ENCODE measurements at regions of chr7 and their contacts with region 1.

Region 1: GRCh38 chr7:128387216-128388144 is 22.3 kb downstream of the IMPDH1 start:
- DNase-seq: peak; percentile 71
- ATAC-seq: peak; percentile 89
- H3K4me3 ChIP-seq: no peak overlapping the region
- H3K4me3 Mint-ChIP-seq: no peak overlapping the region
- H3K27ac ChIP-seq: no peak overlapping the region
- H3K27ac Mint-ChIP-seq: no peak overlapping the region
- H3K4me1 ChIP-seq: peaks cover 0 to 7% of the 10 kb centered on the region in 2 donors
- H3K4me1 Mint-ChIP-seq: peaks cover 6% of the 10 kb centered on the region
- H3K27me3 ChIP-seq: peaks cover 0 to 11% (median 3%) of the 10 kb centered on the region in 4 experiments
- H3K27me3 Mint-ChIP-seq: no peaks in the 10 kb centered on the region
- CTCF ChIP-seq: peak; percentile 86

Region 2: DNA sequence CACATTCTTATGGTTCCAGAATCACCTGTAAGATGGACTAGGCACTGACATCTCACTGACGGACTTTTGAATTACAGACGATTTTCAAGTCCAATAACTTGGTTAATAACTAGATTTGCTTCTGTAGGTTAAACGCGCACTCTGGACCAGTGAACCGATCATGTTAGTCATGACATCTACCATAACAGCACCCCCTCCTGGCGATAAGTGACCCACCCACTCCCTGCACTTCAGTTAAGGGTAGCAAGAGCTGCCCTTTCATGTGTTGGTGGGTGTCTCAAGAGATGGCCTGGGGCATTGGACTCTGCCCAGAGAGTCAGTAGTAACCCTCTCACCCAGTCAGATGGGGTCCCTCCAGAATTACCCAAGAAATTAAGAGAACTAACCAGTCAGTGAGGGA is 1147.7 kb before region 1 on chr7:
- CTCF ChIA-PET with region 1: no interaction called
- POLR2A ChIA-PET with region 1: no interaction called
- intact Hi-C with region 1: no loop called
- DNase-seq: no peak
- ATAC-seq: no peak
- H3K4me3 ChIP-seq: no peak overlapping the region
- H3K4me3 Mint-ChIP-seq: no peak overlapping the region
- H3K27ac ChIP-seq: no peak overlapping the region
- H3K27ac Mint-ChIP-seq: no peak overlapping the region
- H3K4me1 ChIP-seq: no peaks in the 10 kb centered on the region
- H3K4me1 Mint-ChIP-seq: no peaks in the 10 kb centered on the region
- H3K27me3 ChIP-seq: peaks cover 0 to 9% (median 3%) of the 10 kb centered on the region in 4 experiments
- H3K27me3 Mint-ChIP-seq: peaks cover 38% of the 10 kb centered on the region
- CTCF ChIP-seq: no peak

Region 3: DNA sequence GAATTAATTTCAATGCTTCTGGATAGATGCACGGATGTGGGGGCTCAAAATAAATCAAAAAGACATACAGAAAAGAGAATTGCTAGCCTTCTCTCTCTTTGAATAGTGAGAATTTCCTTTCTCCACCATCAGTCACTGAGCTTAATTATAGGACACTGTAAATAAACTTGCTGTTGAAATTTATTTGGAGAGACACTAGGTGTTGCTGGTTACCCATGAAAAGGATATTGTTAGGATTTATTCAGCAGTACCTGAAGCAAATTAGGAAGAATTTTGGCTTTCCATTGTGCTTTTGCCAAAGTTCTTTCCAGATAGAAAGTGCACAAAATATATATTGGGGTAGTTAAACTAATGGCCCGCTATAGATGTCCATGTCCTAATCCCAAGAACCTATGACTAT is 829.7 kb before region 1 on chr7:
- CTCF ChIA-PET with region 1: interaction called, 4 read pairs
- POLR2A ChIA-PET with region 1: no interaction called
- intact Hi-C with region 1: loop called (anchors 5 kb)
- DNase-seq: no peak
- ATAC-seq: no peak
- H3K4me3 ChIP-seq: no peak overlapping the region
- H3K4me3 Mint-ChIP-seq: no peak overlapping the region
- H3K27ac ChIP-seq: no peak overlapping the region
- H3K27ac Mint-ChIP-seq: no peak overlapping the region
- H3K4me1 ChIP-seq: no peaks in the 10 kb centered on the region
- H3K4me1 Mint-ChIP-seq: no peaks in the 10 kb centered on the region
- H3K27me3 ChIP-seq: no peaks in the 10 kb centered on the region
- H3K27me3 Mint-ChIP-seq: peaks cover 8% of the 10 kb centered on the region
- CTCF ChIP-seq: no peak

Region 4: DNA sequence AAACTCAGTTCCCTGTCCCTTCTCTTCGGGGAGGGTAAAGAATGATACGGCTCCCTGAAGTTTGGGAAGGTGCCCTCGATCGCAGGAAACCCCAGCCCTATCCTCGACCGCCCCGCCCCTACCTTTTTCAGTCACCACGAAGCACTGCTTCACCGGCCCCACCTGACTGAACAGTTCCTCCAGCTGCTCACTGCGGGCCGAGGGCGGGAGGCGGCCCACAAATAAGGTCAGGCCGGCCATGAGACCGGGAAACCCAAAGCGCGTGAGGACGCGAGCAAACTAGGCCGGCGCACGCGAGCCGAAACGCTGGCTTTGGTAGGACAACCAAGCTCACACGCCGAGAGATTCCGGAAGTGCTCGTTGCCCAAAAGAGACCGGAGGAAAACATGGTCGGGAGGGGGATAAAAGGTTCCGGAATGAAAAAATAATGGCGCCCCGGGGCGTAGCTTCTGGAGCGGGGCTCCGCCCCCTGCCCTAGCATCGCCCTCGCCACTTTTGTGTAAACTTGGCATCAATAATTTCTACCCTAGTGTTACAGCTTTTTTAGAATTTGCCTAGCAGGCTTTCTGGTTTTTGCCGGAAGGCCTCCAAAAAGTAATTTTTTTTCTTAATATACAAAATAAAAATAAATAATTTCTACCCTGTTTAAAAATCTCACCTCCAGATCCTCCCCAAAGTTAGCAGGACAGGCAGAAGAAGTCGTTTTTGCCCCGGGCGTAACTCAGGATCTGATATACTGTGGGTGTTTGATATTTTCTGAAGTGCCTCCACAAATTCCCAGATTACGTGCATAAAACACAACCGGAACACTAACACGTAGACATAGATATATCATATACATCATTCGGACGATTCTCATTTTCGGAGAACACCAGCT is 43.7 kb before region 1 on chr7 and contains the start of gene RBM28:
- CTCF ChIA-PET with region 1: interaction called, 32 read pairs
- POLR2A ChIA-PET with region 1: no interaction called
- intact Hi-C with region 1: loop called (anchors 1 kb)
- DNase-seq: peak; percentile 95
- ATAC-seq: peak; percentile 95
- H3K4me3 ChIP-seq: peak within 1 kb of the TSS; percentile 75 to 91 (median 81)
- H3K4me3 Mint-ChIP-seq: peak within 1 kb of the TSS; percentile 98
- H3K27ac ChIP-seq: peak within 1 kb of the TSS; percentile 71 to 76
- H3K27ac Mint-ChIP-seq: peak within 1 kb of the TSS; percentile 96
- H3K4me1 ChIP-seq: peaks cover 15 to 19% of the 10 kb centered on the region in 2 donors
- H3K4me1 Mint-ChIP-seq: peaks cover 28% of the 10 kb centered on the region
- H3K27me3 ChIP-seq: peaks cover 0 to 11% (median 1%) of the 10 kb centered on the region in 4 experiments
- H3K27me3 Mint-ChIP-seq: peaks cover 14% of the 10 kb centered on the region
- CTCF ChIP-seq: no peak
- total RNA-seq, gene RBM28: 46.2 and 52.8 TPM in 2 replicates

Region 5: DNA sequence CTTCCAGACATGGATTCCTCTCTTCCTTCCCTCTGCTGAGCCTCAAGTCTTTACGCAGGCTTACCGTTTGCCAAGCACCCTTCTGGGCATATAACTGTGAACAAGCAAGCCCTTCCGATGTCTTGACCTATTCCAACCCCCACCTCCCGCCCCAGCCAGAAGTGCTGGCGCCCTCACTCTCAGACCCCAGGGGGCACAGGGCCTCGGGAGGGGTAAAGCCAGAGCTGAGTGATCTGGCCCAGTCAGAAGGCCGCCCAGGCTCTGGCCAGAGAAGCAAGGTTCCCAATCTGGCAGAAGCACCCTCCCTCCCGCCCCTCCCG is 27.2 kb before region 1 on chr7:
- CTCF ChIA-PET with region 1: no interaction called
- POLR2A ChIA-PET with region 1: no interaction called
- intact Hi-C with region 1: no loop called
- DNase-seq: no peak
- ATAC-seq: no peak
- H3K4me3 ChIP-seq: no peak overlapping the region
- H3K4me3 Mint-ChIP-seq: no peak overlapping the region
- H3K27ac ChIP-seq: no peak overlapping the region
- H3K27ac Mint-ChIP-seq: no peak overlapping the region
- H3K4me1 ChIP-seq: peaks cover 15 to 16% of the 10 kb centered on the region in 2 donors
- H3K4me1 Mint-ChIP-seq: peaks cover 17% of the 10 kb centered on the region
- H3K27me3 ChIP-seq: peaks cover 0 to 53% (median 31%) of the 10 kb centered on the region in 4 experiments
- H3K27me3 Mint-ChIP-seq: peaks cover 68% of the 10 kb centered on the region
- CTCF ChIP-seq: no peak

Region 6: GRCh38 chr7:128398016-128398840 is 10.7 kb after region 1 on chr7:
- CTCF ChIA-PET with region 1: interaction called, 11 read pairs
- POLR2A ChIA-PET with region 1: no interaction called
- intact Hi-C with region 1: no loop called
- DNase-seq: peak; percentile 57
- ATAC-seq: peak; percentile 65
- H3K4me3 ChIP-seq: no peak overlapping the region
- H3K4me3 Mint-ChIP-seq: no peak overlapping the region
- H3K27ac ChIP-seq: no peak overlapping the region
- H3K27ac Mint-ChIP-seq: no peak overlapping the region
- H3K4me1 ChIP-seq: no peaks in the 10 kb centered on the region
- H3K4me1 Mint-ChIP-seq: no peaks in the 10 kb centered on the region
- H3K27me3 ChIP-seq: no peaks in the 10 kb centered on the region
- H3K27me3 Mint-ChIP-seq: no peaks in the 10 kb centered on the region
- CTCF ChIP-seq: peak; percentile 88